Activated CD4-positive, alpha-beta T cell treated with anti-CD3 and anti-CD28 coated beads for 36 hours (primary cell): ENCODE measurements at regions of chr17 and their contacts with region 1.

Region 1: DNA sequence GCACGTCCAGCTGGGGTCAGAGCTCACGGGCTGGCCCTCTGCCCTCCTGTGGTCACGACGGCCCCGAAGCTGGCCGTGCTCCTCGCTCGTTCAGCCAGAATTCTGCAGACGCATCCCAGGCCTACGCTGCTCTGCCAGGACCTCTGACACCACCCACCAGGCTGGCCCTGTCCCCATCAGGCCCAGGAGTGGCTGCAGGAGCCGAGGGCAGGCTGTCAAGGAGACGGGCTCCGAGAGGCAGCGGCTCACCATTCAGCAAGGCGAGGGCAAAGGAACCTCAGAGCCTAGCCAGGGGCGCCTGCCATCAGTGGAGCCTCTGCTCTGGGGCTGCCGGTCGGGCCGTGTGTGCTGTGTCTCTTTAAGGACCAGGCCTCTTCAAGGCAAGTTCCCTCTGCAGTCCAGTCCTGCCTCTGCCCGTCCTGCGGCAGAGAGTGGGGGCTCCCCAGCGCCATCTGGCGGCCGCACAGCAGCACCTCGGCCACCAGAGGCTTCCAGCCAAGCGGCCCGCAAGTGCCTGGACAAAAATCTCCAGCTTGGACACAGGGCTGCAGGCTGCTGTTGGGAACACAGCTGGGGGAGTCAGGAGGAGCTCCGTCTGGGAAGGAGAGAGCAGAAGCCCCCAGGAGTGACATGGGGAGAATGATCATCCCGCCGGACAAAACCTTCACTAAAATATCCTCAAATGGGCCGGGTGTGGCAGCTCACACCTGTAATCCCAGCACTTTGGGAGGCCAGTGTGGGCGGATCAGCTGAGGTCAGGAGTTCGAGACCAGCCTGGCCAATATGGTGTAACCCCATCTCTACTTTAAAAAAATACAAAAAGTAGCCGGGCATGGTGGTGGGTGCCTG is 7.4 kb upstream of the ABR start:
- DNase-seq: peak; percentile 87
- ATAC-seq: peak; percentile 92
- H3K4me3 Mint-ChIP-seq: no peak overlapping the region
- H3K27ac Mint-ChIP-seq: no peak overlapping the region
- H3K4me1 Mint-ChIP-seq: peaks cover 8% of the 10 kb centered on the region
- H3K27me3 Mint-ChIP-seq: peaks cover 2% of the 10 kb centered on the region

Region 2: DNA sequence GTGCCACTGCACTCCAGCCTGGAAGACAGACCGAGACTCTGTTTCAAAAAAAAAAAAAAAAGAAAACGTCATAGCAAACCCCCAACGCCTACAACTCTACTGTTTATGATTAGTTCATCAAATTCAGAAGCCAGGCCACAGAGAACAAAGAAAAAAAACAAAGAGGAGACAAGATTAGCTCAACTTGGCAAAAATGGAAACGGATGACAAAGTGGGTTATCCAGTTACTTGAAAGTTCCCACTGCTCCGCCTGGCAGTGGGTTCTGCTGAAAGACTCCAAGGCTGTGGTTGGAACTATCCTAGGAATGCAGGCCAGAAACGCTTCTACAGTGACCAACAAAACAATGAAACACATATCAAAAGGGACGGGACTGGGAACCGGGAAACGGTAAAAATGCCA is 351.9 kb before region 1 on chr17:
- CTCF ChIA-PET with region 1: no interaction called
- POLR2A ChIA-PET with region 1: no interaction called
- intact Hi-C with region 1: no loop called
- DNase-seq: no peak
- ATAC-seq: no peak
- H3K4me3 Mint-ChIP-seq: no peak overlapping the region
- H3K27ac Mint-ChIP-seq: no peak overlapping the region
- H3K4me1 Mint-ChIP-seq: no peaks in the 10 kb centered on the region
- H3K27me3 Mint-ChIP-seq: no peaks in the 10 kb centered on the region

Region 3: DNA sequence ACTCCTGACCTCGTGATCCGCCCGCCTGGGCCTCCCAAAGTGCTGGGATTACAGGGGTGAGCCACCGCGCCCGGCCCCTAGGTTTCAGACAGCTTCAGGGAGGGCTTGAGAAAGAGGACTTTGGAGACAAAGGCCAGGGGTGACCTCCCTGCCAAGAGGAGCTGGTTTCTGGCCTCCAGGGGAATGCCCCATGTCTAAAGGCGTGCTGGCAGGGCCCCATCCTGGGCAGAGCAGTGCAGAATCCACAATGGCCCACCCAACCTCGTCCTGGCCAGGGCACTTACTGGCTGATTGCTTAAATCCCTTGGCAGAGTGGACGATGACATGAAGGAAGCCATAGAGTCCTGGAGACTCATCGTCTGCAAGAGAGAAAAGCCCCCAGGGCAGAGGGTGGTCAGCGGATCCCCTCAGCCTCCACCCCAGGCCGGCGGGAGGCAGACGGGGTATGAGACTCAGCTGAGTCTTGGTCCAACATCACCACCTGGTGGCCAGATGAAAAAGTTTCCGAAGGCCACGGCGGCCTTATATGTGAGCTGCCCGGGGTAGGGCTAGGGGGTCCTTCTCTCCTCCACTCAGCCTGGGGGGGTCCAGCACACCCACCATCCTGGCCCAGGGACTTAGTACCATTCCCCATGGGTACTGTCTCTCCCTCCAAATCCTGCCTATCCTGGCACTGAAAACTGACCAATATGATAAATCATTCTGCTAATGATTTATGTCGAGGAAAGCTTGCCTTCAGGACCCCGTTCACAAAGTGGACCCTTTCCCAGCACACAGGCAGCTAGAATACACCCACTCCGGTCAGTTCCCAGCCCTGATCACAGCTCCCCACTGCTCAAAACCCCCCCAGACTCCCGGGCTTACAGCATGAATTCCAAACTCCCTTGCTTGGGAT is 131.1 kb before region 1 on chr17:
- CTCF ChIA-PET with region 1: interaction called, 13 read pairs
- POLR2A ChIA-PET with region 1: no interaction called
- intact Hi-C with region 1: loop called (anchors 1 to 5 kb)
- DNase-seq: peak; percentile 71
- ATAC-seq: peak; percentile 86
- H3K4me3 Mint-ChIP-seq: no peak overlapping the region
- H3K27ac Mint-ChIP-seq: no peak overlapping the region
- H3K4me1 Mint-ChIP-seq: no peaks in the 10 kb centered on the region
- H3K27me3 Mint-ChIP-seq: no peaks in the 10 kb centered on the region

Region 4: GRCh38 chr17:1122533-1123392 is 64.4 kb before region 1 on chr17:
- CTCF ChIA-PET with region 1: interaction called, 91 read pairs
- POLR2A ChIA-PET with region 1: no interaction called
- intact Hi-C with region 1: loop called (anchors 1 kb)
- DNase-seq: peak; percentile 91
- ATAC-seq: peak; percentile 98
- H3K4me3 Mint-ChIP-seq: no peak overlapping the region
- H3K27ac Mint-ChIP-seq: no peak overlapping the region
- H3K4me1 Mint-ChIP-seq: peaks cover 4% of the 10 kb centered on the region
- H3K27me3 Mint-ChIP-seq: peaks cover 3% of the 10 kb centered on the region

Region 5: DNA sequence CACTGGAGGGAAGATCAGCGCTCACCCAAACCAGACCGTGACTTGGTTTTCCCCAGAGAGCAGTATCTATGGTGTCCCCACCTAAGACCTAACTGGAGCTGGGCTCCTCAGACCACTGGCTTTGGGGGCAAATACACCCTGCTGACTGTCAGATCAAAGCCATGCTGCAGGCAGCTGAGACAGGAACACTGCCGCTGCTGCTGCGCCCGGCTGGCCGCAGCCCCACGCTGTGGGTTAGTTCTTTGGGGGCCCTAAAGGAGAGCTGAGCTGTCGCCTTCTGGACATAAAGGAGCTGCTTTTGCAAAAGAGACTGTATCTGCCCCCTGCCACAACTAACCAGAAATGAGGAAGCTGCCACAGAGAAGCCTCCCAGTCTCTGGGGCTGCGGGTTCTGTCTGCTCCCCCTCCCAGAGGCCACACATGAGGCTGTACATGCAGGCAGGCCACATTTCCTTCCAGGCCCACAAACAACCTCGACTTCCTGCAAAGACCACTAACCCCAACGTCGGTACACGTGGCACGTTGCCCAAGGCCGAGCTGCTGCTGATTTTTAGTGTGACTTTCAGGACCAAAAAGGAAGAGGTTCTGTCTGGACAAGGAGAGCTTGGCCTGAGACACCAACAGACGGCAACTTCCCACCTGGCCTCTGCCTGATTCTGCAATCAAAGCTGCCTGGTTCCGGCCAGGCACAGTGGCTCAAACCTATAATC is 10.8 kb after region 1 on chr17:
- CTCF ChIA-PET with region 1: interaction called, 30 read pairs
- POLR2A ChIA-PET with region 1: no interaction called
- intact Hi-C with region 1: no loop called
- DNase-seq: peak; percentile 35
- ATAC-seq: peak; percentile 47
- H3K4me3 Mint-ChIP-seq: no peak overlapping the region
- H3K27ac Mint-ChIP-seq: no peak overlapping the region
- H3K4me1 Mint-ChIP-seq: peaks cover 25% of the 10 kb centered on the region
- H3K27me3 Mint-ChIP-seq: no peaks in the 10 kb centered on the region

Region 6: DNA sequence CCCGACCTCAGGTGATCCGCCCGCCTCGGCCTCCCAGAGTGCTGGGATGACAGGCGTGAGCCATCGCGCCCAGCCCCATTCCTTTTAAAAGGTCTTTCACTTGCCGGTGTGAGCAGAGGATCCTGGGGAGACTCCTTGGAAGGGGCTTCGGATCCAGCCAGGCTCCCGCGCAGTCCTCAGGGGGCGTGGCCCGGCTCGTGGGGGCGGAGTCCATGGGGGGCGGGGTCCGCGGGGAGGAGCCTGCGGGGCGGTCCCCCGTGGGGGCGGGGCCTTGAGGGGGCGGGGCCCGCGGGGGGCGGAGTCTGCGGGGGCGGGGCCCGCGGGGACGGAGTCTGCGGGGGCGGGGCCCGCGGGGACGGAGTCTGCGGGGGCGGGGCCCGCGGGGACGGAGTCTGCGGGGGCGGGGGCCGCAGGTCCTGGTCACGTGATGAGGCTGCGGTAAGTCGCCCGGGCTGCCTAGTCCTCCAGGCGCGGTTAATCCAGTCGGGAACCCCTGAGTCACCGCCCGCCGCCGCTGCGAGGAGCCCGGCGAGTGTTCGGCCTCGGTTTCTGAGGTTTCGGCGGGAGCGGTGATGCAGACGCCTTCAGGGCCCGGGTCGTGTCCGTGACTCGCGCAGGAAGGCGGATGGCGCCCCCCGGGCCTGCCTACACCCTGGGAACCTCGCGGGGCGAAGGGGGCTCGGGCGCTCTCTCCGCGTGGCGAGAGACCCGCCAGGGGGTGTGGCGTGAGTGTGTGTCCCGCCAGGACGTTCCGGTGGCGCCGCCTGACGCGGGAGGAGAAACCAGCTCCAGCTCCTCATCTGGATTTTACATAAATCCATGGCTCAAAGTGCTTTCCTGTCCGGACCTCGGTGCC is 16.2 kb after region 1 on chr17:
- CTCF ChIA-PET with region 1: interaction called, 30 read pairs
- POLR2A ChIA-PET with region 1: no interaction called
- intact Hi-C with region 1: no loop called
- DNase-seq: peak; percentile 72
- ATAC-seq: peak; percentile 56
- H3K4me3 Mint-ChIP-seq: no peak overlapping the region
- H3K27ac Mint-ChIP-seq: no peak overlapping the region
- H3K4me1 Mint-ChIP-seq: peaks cover 16% of the 10 kb centered on the region
- H3K27me3 Mint-ChIP-seq: peaks cover 2% of the 10 kb centered on the region

Region 7: DNA sequence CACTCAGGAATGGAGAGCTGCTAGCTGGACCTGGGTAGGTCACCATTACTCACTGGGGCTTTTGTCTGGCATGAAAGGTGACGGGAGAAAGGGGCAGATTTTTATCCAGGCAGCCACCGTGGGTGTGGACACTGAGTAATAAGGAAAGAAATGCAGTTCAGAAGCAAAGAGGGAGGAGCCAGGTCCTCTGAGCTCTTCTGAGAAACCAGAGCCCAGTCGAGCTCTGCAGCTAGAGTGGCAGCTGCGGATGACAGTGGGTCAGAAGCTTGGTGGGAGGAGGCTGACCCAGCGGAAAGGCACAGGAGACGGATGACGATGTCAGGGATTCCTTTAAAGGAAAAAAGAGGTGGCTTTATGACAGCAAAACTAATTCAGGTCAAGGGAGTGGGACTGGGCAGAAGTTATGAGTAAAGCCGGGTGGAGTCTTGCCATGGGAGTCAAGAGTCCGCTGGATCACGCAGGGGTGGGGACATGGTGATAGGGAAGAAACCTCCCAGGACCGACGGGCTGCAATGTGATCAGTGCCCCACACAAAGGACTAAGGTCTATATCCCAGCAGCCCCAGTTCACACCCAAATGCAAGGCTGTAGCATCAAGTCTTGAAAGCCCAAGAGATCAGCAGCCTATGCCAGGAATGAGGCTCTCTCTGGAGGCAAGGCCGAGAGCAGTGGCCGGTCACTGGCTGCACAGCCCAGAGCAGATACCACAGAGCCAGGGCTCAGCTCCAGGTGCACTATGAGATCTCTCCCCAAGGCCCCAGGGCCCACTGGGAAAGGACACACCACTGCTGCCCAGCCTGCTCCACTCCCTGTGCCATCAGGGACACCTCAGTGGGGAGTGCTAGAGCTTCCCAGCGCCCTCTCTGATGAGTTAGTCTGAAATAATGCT is 1220.0 kb after region 1 on chr17:
- CTCF ChIA-PET with region 1: no interaction called
- POLR2A ChIA-PET with region 1: no interaction called
- intact Hi-C with region 1: no loop called
- DNase-seq: peak; percentile 63
- ATAC-seq: peak; percentile 76
- H3K4me3 Mint-ChIP-seq: no peak overlapping the region
- H3K27ac Mint-ChIP-seq: peak overlapping the region; percentile 80
- H3K4me1 Mint-ChIP-seq: peaks cover 27% of the 10 kb centered on the region
- H3K27me3 Mint-ChIP-seq: no peaks in the 10 kb centered on the region